ENCODE measurements at regions of chr6 and their contacts with region 1.

Region 1: GRCh38 chr6:14210663-14211561 is 93.3 kb downstream of the CD83 start:
- DNase-seq: peak; percentile 70
- H3K4me3 ChIP-seq: peak overlapping the region; percentile 69
- H3K27ac ChIP-seq: peak overlapping the region; percentile 61
- H3K27me3 ChIP-seq: no peaks in the 10 kb centered on the region
- CTCF ChIP-seq: peak; percentile 47

Region 2: GRCh38 chr6:13508711-13509705 is 701.9 kb before region 1 on chr6:
- CTCF ChIA-PET with region 1: no interaction called
- POLR2A ChIA-PET with region 1: no interaction called
- DNase-seq: no peak
- H3K4me3 ChIP-seq: no peak overlapping the region
- H3K27ac ChIP-seq: no peak overlapping the region
- H3K27me3 ChIP-seq: no peaks in the 10 kb centered on the region
- CTCF ChIP-seq: no peak

Region 3: GRCh38 chr6:14852375-14852774 is 641.5 kb after region 1 on chr6:
- CTCF ChIA-PET with region 1: no interaction called
- POLR2A ChIA-PET with region 1: interaction called, 10 read pairs
- DNase-seq: no peak
- H3K4me3 ChIP-seq: no peak overlapping the region
- H3K27ac ChIP-seq: no peak overlapping the region
- H3K27me3 ChIP-seq: no peaks in the 10 kb centered on the region
- CTCF ChIP-seq: no peak

Region 4: DNA sequence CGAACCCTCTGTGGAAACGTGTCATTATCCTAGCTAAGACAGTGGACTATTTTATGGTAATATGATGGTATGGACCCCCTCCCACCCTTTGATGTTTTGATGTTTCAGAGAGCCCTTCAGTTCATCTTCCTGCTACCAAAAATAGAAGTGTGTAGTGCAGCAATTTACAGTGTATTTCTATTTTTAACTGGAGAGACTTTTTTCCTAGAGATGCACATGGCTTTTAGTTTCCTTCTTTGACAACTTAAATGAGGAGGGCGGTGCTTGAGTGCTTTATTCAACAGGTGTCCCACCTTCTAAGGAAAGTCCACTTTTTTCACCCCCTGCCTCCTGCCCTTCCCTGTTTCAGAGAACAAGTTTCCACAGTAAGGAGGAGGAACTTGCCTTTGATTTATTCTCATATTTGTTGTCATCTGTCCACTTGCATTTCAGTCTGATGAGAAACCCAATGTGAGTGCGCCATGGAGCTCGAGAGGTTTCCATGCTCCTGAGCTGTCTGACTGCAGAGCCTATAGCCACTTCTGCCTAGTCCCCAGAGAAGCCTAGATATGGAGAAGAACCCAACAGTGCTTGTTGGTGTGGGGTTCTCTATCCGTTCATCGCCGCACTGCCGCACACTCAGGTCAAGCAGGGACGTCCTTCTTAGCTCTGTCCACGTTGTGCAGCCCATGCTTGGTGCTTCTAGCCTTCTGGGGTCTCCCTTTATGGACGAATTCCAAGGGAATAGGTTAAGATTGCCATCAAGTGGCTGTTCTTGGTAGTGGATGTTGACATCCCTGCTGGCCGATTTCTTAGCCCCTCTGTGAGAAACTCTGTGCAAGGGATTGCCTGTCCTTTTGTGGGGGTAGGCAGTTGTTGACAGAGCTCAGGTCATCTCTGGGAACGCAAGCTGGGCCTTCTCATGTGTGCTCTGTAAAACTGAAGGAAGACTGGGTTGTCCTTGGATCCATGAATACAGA is 1179.1 kb after region 1 on chr6:
- CTCF ChIA-PET with region 1: interaction called, 10 read pairs
- POLR2A ChIA-PET with region 1: no interaction called
- DNase-seq: no peak
- H3K4me3 ChIP-seq: no peak overlapping the region
- H3K27ac ChIP-seq: no peak overlapping the region
- H3K27me3 ChIP-seq: no peaks in the 10 kb centered on the region
- CTCF ChIP-seq: peak; percentile 74